ENCODE measurements at regions of chr12 and their contacts with region 1.

Region 1: GRCh38 chr12:77324763-77325468 is 259.5 kb upstream of the E2F7 start:
- DNase-seq: peak; percentile 71
- H3K4me3 ChIP-seq: peak overlapping the region; percentile 69 to 96 (median 74)
- H3K27ac ChIP-seq: peak overlapping the region; percentile 29
- H3K4me1 ChIP-seq: peaks cover 21% of the 10 kb centered on the region
- H3K27me3 ChIP-seq: no peaks in the 10 kb centered on the region
- CTCF ChIP-seq: peak; percentile 40 to 68

Region 2: GRCh38 chr12:77049767-77050353 is 275.1 kb before region 1 on chr12:
- CTCF ChIA-PET with region 1: interaction called, 3 read pairs
- dilution Hi-C with region 1: no loop called
- in situ Hi-C with region 1: no loop called
- intact Hi-C with region 1: loop called (anchors 5 kb)
- DNase-seq: peak; percentile 52
- H3K4me3 ChIP-seq: no peak overlapping the region
- H3K27ac ChIP-seq: no peak overlapping the region
- H3K4me1 ChIP-seq: no peaks in the 10 kb centered on the region
- H3K27me3 ChIP-seq: no peaks in the 10 kb centered on the region
- CTCF ChIP-seq: peak; percentile 81

Region 3: DNA sequence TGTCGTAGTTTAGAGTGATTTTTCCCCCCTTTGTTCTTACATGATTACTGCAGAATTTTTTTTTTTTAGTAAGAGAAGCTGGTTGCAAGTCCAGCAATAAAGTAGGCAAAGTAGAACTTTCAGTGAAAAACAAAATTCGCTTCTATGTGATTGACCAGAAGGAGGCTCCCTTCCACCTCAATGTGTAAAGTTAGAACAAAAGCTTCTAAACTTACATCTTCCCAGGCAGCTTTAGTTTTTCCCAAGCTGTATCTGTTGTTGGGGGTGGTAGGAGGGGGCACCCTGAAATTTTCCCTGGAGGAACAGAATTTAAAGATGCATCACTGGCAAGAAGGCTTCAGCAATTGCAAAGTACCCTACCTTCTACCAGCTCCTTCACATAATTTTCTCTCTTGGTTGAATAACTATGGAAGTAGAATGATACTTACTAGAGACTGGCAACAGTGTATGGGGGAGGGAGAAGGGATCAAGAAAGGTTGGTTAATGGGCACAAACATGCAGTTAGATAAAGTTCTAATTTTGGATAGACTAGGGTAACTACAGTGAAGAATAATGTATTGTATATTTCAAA is 172.2 kb before region 1 on chr12:
- CTCF ChIA-PET with region 1: interaction called, 6 read pairs
- dilution Hi-C with region 1: no loop called
- in situ Hi-C with region 1: no loop called
- intact Hi-C with region 1: loop called (anchors 1 kb)
- DNase-seq: peak; percentile 19
- H3K4me3 ChIP-seq: no peak overlapping the region
- H3K27ac ChIP-seq: no peak overlapping the region
- H3K4me1 ChIP-seq: peaks cover 6% of the 10 kb centered on the region
- H3K27me3 ChIP-seq: no peaks in the 10 kb centered on the region
- CTCF ChIP-seq: peak; percentile 48 to 70

Region 4: DNA sequence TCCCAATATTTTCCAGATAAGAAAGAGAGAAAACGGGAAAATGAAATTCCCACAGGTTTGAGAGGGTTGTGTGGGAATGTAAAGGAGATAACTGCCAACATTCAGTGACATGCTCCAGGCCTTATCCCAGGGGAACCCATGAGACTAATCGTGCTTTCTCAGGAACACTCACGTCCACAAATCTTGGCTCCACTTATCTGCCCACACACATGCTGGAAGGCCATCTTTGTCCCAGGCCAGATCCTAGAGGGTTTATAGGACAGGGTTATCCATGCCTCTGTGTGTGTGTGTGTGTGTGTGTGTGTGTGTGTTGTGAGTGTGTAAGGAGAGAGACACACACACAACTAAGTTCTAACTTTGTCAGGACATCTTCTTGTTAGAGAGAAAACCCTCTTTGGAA is 77.4 kb before region 1 on chr12:
- CTCF ChIA-PET with region 1: no interaction called
- dilution Hi-C with region 1: no loop called
- in situ Hi-C with region 1: no loop called
- intact Hi-C with region 1: loop called (anchors 10 kb)
- DNase-seq: no peak
- H3K4me3 ChIP-seq: no peak overlapping the region
- H3K27ac ChIP-seq: no peak overlapping the region
- H3K4me1 ChIP-seq: no peaks in the 10 kb centered on the region
- H3K27me3 ChIP-seq: no peaks in the 10 kb centered on the region
- CTCF ChIP-seq: no peak

Region 5: DNA sequence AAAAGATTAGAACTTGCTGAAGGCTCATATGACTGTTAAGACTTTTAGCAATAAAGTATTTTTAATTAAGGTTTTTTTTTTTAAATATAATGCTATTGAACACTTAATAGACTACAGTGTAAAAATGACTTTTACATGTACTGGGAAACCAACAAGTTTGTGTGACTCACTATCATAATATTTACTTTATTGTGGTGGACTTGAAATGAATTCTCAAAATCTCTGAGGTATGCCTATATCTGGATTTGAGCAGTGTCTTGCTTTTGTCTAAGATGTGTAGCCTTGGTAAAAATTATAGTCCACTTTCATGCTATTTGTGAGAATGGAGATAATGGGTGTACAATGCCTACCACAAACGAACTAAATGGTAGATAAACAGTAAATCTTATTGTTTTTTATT is 471.9 kb after region 1 on chr12:
- CTCF ChIA-PET with region 1: interaction called, 14 read pairs
- dilution Hi-C with region 1: no loop called
- in situ Hi-C with region 1: no loop called
- intact Hi-C with region 1: no loop called
- DNase-seq: peak; percentile 41
- H3K4me3 ChIP-seq: no peak overlapping the region
- H3K27ac ChIP-seq: no peak overlapping the region
- H3K4me1 ChIP-seq: no peaks in the 10 kb centered on the region
- H3K27me3 ChIP-seq: no peaks in the 10 kb centered on the region
- CTCF ChIP-seq: no peak